Activated T-helper 1 cell treated with anti-CD3 and anti-CD28 coated beads, Interleukin-12 subunit alpha, Interleukin-12 subunit beta, Interleukin-2, Interleukin-4 antibody, amounts not matched to agents 30 ng/mL and 10 ng/mL and 1 ng/mL, durations not matched to agents 14 hours and 24 hours and 36 hours (primary cell): ENCODE measurements at regions of chr1 and their contacts with region 1.

Region 1: DNA sequence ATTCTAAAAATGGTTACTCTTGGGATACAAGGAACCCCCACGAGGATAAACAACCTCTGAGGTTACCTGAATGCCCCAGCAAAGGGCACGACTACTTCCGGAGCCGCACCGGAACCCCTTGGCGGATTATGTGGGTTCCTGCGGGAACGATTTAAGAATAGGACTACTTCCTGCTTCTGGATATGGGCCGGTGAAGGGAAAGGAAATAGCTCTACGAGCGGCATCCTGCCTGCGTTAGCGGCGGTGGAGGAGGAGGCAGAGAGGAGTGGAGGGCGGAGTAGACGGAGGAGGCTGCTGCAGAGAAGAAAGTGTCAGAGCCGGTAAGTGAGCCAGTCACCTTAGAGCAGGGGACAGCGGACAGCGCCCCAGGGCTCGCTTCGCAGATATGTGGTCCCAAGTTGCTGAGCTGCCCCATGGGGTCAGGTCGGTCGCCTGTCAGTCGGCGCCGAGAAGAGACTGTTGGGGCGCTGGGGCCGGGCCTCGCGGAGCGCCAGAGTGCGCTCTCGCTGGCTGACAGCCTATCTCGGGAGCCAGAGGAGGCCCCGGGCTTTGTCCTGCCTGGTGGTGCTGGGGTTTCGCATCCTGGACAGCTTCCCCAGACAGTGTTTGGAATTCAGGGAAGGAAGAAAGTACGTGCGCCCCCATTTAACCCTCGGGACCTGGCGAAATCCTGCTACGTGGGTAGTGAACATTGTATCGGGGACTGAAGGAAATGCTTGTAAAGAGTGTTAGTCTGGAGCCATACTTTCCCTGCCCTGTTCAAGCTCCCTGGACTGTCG is at the start of gene KLHL20:
- DNase-seq: peak; percentile 84
- H3K4me3 Mint-ChIP-seq: peak within 1 kb of the TSS; percentile 93
- H3K27ac Mint-ChIP-seq: peak within 1 kb of the TSS; percentile 98
- H3K4me1 Mint-ChIP-seq: peaks cover 30% of the 10 kb centered on the region
- H3K27me3 Mint-ChIP-seq: peaks cover 14% of the 10 kb centered on the region
- total RNA-seq, gene KLHL20: 17.8 and 18.3 TPM in 2 replicates

Region 2: DNA sequence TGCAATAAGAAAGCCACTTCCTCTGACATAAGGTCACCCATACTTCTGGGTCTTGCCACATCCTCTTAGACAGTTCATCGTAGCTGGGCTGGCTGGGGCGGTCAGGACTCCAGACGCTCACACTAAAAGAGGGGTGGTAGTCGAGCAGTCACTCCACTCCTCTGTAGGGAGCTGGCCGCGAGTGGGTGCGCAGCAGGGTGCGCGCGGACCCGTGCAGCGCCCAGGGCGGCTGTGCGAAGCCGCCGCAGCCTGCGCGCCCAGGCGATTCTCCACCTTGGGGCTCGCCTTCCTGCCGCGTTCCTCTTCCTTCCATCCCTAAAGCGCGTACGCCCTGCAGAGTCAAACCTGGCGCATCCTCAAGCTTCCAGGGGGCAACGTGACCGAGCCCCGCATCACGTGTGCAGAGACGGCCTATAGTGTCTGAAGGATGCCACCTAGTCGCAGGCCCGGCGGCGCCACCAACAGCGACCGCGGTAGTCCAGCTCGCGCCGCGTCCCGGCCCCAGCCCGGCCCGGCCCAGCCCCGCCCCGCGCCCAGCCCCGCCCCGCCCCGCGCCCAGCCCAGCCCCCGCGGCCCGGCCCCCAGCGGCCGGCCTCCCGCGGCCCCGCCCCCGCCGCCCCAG is 238.2 kb before region 1 on chr1:
- intact Hi-C with region 1: loop called (anchors 1 kb)
- DNase-seq: peak; percentile 74
- H3K4me3 Mint-ChIP-seq: peak overlapping the region; percentile 92
- H3K27ac Mint-ChIP-seq: peak overlapping the region; percentile 93
- H3K4me1 Mint-ChIP-seq: peaks cover 65% of the 10 kb centered on the region
- H3K27me3 Mint-ChIP-seq: no peaks in the 10 kb centered on the region

Region 3: GRCh38 chr1:174013864-174014418 is 299.0 kb after region 1 on chr1:
- intact Hi-C with region 1: loop called (anchors 1 kb)
- DNase-seq: no peak
- H3K4me3 Mint-ChIP-seq: no peak overlapping the region
- H3K27ac Mint-ChIP-seq: peak overlapping the region; percentile 31
- H3K4me1 Mint-ChIP-seq: peaks cover 50% of the 10 kb centered on the region
- H3K27me3 Mint-ChIP-seq: no peaks in the 10 kb centered on the region